AG04450 (cell line): ENCODE measurements at regions of chr17 and their contacts with region 1.

Region 1: GRCh38 chr17:76726231-76726775 is at the start of gene JMJD6:
- DNase-seq: peak; percentile 89
- H3K4me3 ChIP-seq: peak within 1 kb of the TSS; percentile 93
- H3K27ac ChIP-seq: peak within 1 kb of the TSS; percentile 94
- H3K27me3 ChIP-seq: no peaks in the 10 kb centered on the region
- CTCF ChIP-seq: no peak
- polyA plus RNA-seq, gene JMJD6: 12.4 and 17.3 TPM in 2 replicates

Region 2: GRCh38 chr17:76737082-76737675 is 10.9 kb after region 1 on chr17 and contains the start of gene SRSF2:
- CTCF ChIA-PET with region 1: interaction called, 3 read pairs
- POLR2A ChIA-PET with region 1: interaction called, 41 read pairs
- DNase-seq: peak; percentile 97
- H3K4me3 ChIP-seq: peak within 1 kb of the TSS; percentile 96
- H3K27ac ChIP-seq: peak within 1 kb of the TSS; percentile 96
- H3K27me3 ChIP-seq: no peaks in the 10 kb centered on the region
- CTCF ChIP-seq: no peak
- polyA plus RNA-seq, gene SRSF2: 170 and 184 TPM in 2 replicates

Region 3: DNA sequence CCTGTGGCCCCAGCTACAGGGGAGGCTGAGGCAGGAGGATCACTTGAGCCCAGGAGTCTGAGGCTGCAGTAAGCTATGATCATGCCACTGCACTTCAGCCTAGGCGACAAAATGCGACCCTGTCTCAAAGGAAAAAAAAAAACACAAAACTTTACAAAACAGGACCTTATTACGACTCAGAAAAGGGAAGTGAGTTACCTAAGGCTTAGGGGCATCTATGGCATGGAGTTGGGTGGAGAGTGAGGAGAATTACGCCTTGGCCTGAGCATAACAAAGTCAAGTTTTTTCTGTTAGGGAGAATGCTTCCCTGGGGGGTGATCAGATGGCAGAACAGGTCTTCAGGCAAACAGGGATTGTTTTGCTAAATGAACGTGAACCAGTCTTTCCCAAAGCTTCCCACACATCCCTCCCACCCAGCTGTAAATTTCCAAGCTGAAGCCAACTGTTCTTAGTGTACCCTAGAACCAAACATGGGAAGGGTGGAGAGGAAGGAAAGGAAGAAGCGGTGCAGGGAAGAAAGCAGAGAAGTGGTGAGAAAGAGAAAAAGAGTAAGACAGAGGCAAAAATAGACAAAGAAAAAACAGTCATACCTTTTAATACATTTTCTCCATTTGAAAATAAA is 1207.6 kb after region 1 on chr17:
- CTCF ChIA-PET with region 1: no interaction called
- POLR2A ChIA-PET with region 1: interaction called, 10 read pairs
- DNase-seq: no peak
- H3K4me3 ChIP-seq: no peak overlapping the region
- H3K27ac ChIP-seq: no peak overlapping the region
- H3K27me3 ChIP-seq: peaks cover 38% of the 10 kb centered on the region
- CTCF ChIP-seq: no peak